CD8-positive, alpha-beta T cell (primary cell): ENCODE measurements at regions of chr1 and their contacts with region 1.

Region 1: DNA sequence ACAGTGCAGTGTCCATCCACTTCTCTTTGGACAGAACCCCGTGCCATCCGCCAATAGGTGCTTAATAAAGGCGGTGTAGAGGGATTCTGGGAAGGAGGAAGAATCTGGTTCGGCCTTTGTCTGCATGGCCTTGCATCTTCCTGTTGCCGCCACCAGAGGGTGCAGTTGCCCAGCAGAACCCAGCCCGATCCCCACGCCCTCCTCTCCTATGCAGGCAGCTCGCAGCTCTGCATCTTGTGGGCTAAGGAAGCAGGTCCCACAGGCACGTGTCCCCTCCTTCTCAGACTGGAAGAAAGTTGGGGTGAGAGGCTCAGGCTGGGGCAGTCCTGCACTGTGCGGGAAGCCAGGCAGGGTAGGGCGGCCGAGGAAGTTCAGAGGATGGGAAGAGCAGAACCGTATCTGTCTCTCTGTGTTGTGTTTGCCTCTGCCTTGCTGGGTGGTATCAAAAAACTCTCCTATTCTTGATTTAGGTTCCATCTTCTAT is 20.8 kb downstream of the NAV1 start:
- DNase-seq: peak; percentile 35 to 76 (median 65)
- ATAC-seq: peak; percentile 89
- H3K4me3 ChIP-seq: no peak overlapping the region
- H3K4me3 Mint-ChIP-seq: no peak overlapping the region
- H3K27ac ChIP-seq: no peak overlapping the region
- H3K27ac Mint-ChIP-seq: no peak overlapping the region
- H3K4me1 ChIP-seq: no peaks in the 10 kb centered on the region
- H3K4me1 Mint-ChIP-seq: peaks cover 4% of the 10 kb centered on the region
- H3K27me3 ChIP-seq: no peaks in the 10 kb centered on the region
- H3K27me3 Mint-ChIP-seq: no peaks in the 10 kb centered on the region
- CTCF ChIP-seq: peak; percentile 80

Region 2: DNA sequence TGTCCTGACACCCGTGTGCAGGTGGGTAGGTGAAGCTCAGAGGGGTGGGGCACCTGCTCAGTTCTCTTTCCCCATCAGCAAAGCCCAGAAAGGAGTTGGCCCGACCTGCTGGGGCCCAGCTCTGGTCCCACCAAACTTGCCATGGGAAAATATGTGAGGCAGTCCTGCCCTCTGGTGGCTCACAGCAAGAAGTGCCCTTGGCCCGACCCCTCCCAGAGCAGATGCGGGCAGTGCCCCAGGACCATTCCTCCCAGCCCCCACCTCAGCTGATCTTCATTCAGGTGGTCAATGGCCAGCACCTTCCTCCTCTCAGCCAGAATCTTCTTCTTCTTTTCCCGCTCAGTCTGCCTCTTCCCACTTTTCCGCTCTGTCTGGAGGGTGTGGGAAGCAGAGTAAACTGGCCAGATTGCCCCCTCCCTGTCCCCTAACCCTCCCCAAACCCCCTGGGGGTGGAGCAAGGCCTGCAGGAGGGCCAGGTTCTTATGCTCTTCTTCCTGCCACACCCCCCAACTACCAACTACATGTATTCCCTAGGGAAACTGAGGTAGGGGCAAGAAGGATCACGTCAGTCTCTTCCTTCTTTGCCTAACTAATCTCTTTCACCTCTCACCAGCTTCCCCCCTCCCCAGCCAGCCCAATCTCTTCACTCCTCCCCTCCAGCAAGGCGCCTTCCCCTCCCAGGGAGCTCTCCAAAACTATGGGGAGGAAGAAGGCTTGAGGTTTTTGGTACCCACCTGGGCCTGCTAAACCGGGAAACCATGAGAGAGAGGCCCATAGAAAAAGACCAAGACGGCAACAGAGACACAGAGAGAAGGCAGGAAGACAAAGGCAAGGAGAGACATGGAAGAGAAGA is 197.8 kb before region 1 on chr1:
- CTCF ChIA-PET with region 1: no interaction called
- POLR2A ChIA-PET with region 1: no interaction called
- intact Hi-C with region 1: no loop called
- DNase-seq: peak in 2 of 9 experiments; percentile 14 to 34
- ATAC-seq: no peak
- H3K4me3 ChIP-seq: no peak overlapping the region
- H3K4me3 Mint-ChIP-seq: no peak overlapping the region
- H3K27ac ChIP-seq: no peak overlapping the region
- H3K27ac Mint-ChIP-seq: no peak overlapping the region
- H3K4me1 ChIP-seq: no peaks in the 10 kb centered on the region
- H3K4me1 Mint-ChIP-seq: no peaks in the 10 kb centered on the region
- H3K27me3 ChIP-seq: no peaks in the 10 kb centered on the region
- H3K27me3 Mint-ChIP-seq: peaks cover 12% of the 10 kb centered on the region
- CTCF ChIP-seq: no peak

Region 3: DNA sequence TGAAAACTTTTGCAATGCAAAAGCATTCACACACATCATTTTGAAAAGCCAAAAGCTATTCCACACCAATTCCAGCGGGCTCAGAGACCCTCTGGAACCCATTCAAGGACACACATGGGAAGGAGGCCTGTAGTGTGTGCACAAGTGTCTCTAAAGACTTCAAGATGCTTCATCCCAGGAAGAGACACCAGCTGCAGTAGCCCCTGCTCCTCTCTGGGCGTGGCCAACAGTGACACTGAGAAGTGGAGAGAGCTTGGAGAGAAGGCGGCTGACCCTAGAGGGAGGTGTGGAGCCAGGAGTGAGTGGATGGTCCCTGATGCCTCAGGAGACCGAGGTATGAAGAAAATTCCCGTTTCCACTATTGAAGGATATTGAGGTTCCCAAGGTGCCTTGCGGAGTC is 123.3 kb before region 1 on chr1:
- CTCF ChIA-PET with region 1: no interaction called
- POLR2A ChIA-PET with region 1: no interaction called
- intact Hi-C with region 1: no loop called
- DNase-seq: no peak
- ATAC-seq: no peak
- H3K4me3 ChIP-seq: no peak overlapping the region
- H3K4me3 Mint-ChIP-seq: no peak overlapping the region
- H3K27ac ChIP-seq: no peak overlapping the region
- H3K27ac Mint-ChIP-seq: no peak overlapping the region
- H3K4me1 ChIP-seq: no peaks in the 10 kb centered on the region
- H3K4me1 Mint-ChIP-seq: peaks cover 5% of the 10 kb centered on the region
- H3K27me3 ChIP-seq: no peaks in the 10 kb centered on the region
- H3K27me3 Mint-ChIP-seq: peaks cover 17% of the 10 kb centered on the region
- CTCF ChIP-seq: no peak

Region 4: DNA sequence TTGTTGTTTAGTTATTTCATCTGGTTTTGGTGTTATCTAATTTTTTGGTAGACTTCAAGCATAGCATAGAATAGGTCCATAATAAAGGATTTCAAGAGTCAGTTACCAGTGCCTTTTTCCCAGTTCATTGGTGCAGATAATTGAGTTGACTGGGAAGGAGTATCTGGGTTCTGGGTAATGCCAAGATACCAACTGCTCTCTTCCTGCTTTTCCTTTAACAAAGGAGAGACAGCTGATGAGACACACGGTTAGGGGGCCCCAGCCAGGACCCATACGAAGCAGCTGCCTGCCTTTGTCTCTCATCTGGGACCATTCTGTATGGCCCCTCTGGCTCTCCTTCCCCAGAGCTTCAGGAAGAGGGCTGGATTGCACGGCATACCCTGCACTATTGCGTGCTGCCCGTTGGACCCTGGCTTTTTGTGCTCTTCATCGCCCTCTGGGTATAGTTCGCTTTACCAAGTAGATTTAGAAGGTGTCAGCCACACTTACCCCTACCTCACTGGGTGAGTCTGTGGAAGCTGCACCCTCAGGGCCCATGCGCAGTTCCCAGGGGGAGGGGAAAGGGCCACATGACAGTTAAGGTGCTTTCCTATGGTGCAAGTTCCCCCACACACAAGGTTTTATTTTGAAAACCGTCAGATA is 13.7 kb before region 1 on chr1:
- CTCF ChIA-PET with region 1: interaction called, 25 read pairs
- POLR2A ChIA-PET with region 1: no interaction called
- intact Hi-C with region 1: no loop called
- DNase-seq: no peak
- ATAC-seq: no peak
- H3K4me3 ChIP-seq: no peak overlapping the region
- H3K4me3 Mint-ChIP-seq: no peak overlapping the region
- H3K27ac ChIP-seq: no peak overlapping the region
- H3K27ac Mint-ChIP-seq: no peak overlapping the region
- H3K4me1 ChIP-seq: no peaks in the 10 kb centered on the region
- H3K4me1 Mint-ChIP-seq: no peaks in the 10 kb centered on the region
- H3K27me3 ChIP-seq: peaks cover 0 to 2% of the 10 kb centered on the region in 2 experiments
- H3K27me3 Mint-ChIP-seq: peaks cover 10% of the 10 kb centered on the region
- CTCF ChIP-seq: no peak

Region 5: GRCh38 chr1:201570886-201571624 is 11.3 kb after region 1 on chr1:
- CTCF ChIA-PET with region 1: interaction called, 19 read pairs
- POLR2A ChIA-PET with region 1: no interaction called
- intact Hi-C with region 1: no loop called
- DNase-seq: no peak
- ATAC-seq: no peak
- H3K4me3 ChIP-seq: no peak overlapping the region
- H3K4me3 Mint-ChIP-seq: no peak overlapping the region
- H3K27ac ChIP-seq: no peak overlapping the region
- H3K27ac Mint-ChIP-seq: no peak overlapping the region
- H3K4me1 ChIP-seq: peaks cover 3% of the 10 kb centered on the region
- H3K4me1 Mint-ChIP-seq: peaks cover 9% of the 10 kb centered on the region
- H3K27me3 ChIP-seq: no peaks in the 10 kb centered on the region
- H3K27me3 Mint-ChIP-seq: no peaks in the 10 kb centered on the region
- CTCF ChIP-seq: no peak

Region 6: GRCh38 chr1:201648066-201648906 is 88.6 kb after region 1 on chr1:
- CTCF ChIA-PET with region 1: no interaction called
- POLR2A ChIA-PET with region 1: no interaction called
- intact Hi-C with region 1: no loop called
- DNase-seq: no peak
- ATAC-seq: no peak
- H3K4me3 ChIP-seq: no peak overlapping the region
- H3K4me3 Mint-ChIP-seq: no peak overlapping the region
- H3K27ac ChIP-seq: no peak overlapping the region
- H3K27ac Mint-ChIP-seq: no peak overlapping the region
- H3K4me1 ChIP-seq: no peaks in the 10 kb centered on the region
- H3K4me1 Mint-ChIP-seq: peaks cover 3% of the 10 kb centered on the region
- H3K27me3 ChIP-seq: peaks cover 0 to 3% of the 10 kb centered on the region in 2 experiments
- H3K27me3 Mint-ChIP-seq: peaks cover 47% of the 10 kb centered on the region
- CTCF ChIP-seq: no peak

Region 7: DNA sequence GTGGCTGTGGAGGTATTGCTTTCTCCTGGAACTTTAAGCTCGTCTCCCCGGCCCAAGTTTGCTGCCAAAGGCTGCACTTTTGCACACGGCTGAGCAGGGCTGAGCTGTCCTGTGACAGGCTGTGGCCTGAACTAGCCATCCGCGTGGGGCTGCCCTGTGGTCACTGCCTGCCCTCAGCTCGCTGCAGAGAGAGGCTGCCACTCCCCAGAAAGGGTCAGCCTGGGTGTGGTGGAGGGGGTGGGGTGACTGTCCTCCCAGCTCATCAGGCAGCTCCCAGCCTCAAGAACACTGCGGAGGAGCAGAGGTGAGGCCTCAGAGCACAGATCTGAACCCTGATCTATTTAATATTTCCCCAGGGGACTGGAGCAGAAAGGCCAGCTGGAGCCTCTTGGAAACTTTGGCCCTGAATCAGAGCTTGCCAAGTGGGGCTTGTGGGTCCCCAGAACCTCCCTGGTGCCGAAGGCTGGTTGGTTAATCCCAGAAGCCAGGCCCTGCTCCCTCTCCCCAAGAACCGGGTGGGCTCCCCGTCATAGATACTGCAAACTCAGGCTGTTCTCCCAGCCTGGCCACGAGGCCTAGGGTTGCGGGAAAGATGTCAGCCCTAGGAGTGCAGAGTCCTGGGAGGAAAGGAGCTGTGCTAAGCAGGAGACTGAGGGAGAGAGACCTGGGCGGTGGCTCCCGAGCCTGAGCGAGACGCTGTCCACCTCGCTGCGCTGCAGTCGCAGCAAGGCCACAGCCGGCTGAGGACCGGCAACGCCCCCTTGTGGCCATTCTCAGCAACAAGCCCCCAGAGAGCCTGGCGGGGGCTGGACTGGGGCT is 144.1 kb after region 1 on chr1:
- CTCF ChIA-PET with region 1: interaction called, 28 read pairs
- POLR2A ChIA-PET with region 1: no interaction called
- intact Hi-C with region 1: loop called in 1 of 2 experiments (anchors 1 kb)
- DNase-seq: peak; percentile 27 to 73 (median 60)
- ATAC-seq: peak; percentile 40
- H3K4me3 ChIP-seq: no peak overlapping the region
- H3K4me3 Mint-ChIP-seq: no peak overlapping the region
- H3K27ac ChIP-seq: no peak overlapping the region
- H3K27ac Mint-ChIP-seq: no peak overlapping the region
- H3K4me1 ChIP-seq: no peaks in the 10 kb centered on the region
- H3K4me1 Mint-ChIP-seq: no peaks in the 10 kb centered on the region
- H3K27me3 ChIP-seq: no peaks in the 10 kb centered on the region
- H3K27me3 Mint-ChIP-seq: no peaks in the 10 kb centered on the region
- CTCF ChIP-seq: peak; percentile 68

Region 8: DNA sequence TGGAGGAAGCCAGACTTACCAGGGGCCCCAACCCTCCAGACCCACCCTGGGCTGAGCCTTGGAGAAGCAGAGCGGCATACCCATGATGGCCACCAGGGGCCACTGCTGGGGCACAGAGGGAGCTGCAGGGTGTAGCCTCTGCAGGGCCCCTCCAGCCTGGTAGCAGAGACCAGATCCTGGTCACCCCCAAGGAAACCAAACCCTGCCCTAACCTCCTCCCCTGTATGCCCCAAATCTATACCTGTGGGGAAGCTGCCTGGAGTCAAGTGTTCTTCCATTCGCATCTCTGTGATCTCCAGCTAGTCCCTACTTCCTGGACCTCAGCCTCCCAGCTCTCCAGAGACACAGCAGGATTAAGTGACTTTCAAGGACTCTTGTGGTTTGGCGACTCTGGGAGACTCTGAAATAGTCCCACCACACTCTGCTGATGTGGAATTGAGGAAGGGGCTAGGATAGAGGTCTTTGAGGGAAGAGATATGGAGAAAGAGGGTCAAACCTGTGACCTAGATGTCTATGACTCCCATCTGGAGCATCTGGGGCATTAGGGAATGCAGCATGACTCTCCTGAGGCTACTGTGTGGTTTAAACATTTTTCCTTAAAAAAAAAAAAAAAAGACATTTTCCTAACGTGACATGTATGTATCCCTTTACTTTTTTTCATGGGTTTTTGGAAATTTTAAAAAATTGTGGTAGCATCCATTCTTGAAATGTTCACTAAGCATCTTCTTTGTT is 150.0 kb after region 1 on chr1:
- CTCF ChIA-PET with region 1: interaction called, 28 read pairs
- POLR2A ChIA-PET with region 1: no interaction called
- intact Hi-C with region 1: loop called in 1 of 2 experiments (anchors 1 kb)
- DNase-seq: peak; percentile 21 to 71 (median 56)
- ATAC-seq: peak; percentile 82
- H3K4me3 ChIP-seq: no peak overlapping the region
- H3K4me3 Mint-ChIP-seq: no peak overlapping the region
- H3K27ac ChIP-seq: no peak overlapping the region
- H3K27ac Mint-ChIP-seq: no peak overlapping the region
- H3K4me1 ChIP-seq: no peaks in the 10 kb centered on the region
- H3K4me1 Mint-ChIP-seq: no peaks in the 10 kb centered on the region
- H3K27me3 ChIP-seq: no peaks in the 10 kb centered on the region
- H3K27me3 Mint-ChIP-seq: no peaks in the 10 kb centered on the region
- CTCF ChIP-seq: peak; percentile 64

Region 9: GRCh38 chr1:201792534-201793305 is 233.0 kb after region 1 on chr1:
- CTCF ChIA-PET with region 1: interaction called, 78 read pairs
- POLR2A ChIA-PET with region 1: no interaction called
- intact Hi-C with region 1: loop called in 1 of 2 experiments (anchors 1 kb)
- DNase-seq: peak in 8 of 9 experiments; percentile 6 to 62 (median 48)
- ATAC-seq: peak; percentile 46
- H3K4me3 ChIP-seq: no peak overlapping the region
- H3K4me3 Mint-ChIP-seq: no peak overlapping the region
- H3K27ac ChIP-seq: no peak overlapping the region
- H3K27ac Mint-ChIP-seq: no peak overlapping the region
- H3K4me1 ChIP-seq: no peaks in the 10 kb centered on the region
- H3K4me1 Mint-ChIP-seq: no peaks in the 10 kb centered on the region
- H3K27me3 ChIP-seq: no peaks in the 10 kb centered on the region
- H3K27me3 Mint-ChIP-seq: no peaks in the 10 kb centered on the region
- CTCF ChIP-seq: peak; percentile 89

Region 10: DNA sequence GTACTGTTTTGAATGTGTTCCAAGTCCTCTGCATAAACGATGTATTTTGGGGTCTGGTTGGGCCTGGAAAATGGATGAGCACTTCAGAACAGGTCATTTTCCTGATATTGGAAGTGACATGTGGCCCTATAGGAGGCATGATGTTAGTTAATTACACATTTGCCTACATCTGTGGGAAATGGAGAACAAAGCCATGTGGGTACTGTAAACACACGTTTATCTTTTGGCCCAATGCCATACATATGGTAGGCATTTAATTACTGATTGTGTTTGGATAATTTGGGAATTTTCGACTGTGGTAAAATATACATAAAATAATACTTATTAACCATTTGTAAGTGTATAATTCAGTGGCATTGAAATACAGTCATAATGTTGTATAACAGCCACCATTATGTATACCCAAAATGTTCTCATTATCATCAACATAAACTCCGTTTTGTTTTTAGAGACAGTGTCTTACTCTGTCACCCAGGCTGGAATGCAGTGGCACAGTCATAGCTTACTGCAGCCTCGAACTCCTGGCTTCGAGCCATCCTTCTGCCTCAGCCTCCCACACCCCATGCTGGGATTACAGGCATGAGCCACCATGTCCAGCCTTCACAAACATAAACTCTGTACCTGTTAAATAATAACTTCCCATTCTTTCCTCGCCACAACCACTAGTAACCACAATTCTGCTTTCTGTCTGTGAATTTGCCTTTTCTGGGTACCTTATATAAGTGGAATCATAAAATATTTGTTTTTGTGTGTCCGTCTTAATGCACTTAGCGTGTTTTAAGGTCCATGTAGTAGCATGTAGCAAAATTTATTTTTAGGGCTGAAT is 410.8 kb after region 1 on chr1:
- CTCF ChIA-PET with region 1: interaction called, 5 read pairs
- POLR2A ChIA-PET with region 1: no interaction called
- intact Hi-C with region 1: loop called in 1 of 2 experiments (anchors 10 kb)
- DNase-seq: no peak
- ATAC-seq: no peak
- H3K4me3 ChIP-seq: no peak overlapping the region
- H3K4me3 Mint-ChIP-seq: no peak overlapping the region
- H3K27ac ChIP-seq: no peak overlapping the region
- H3K27ac Mint-ChIP-seq: no peak overlapping the region
- H3K4me1 ChIP-seq: no peaks in the 10 kb centered on the region
- H3K4me1 Mint-ChIP-seq: peaks cover 4% of the 10 kb centered on the region
- H3K27me3 ChIP-seq: no peaks in the 10 kb centered on the region
- H3K27me3 Mint-ChIP-seq: no peaks in the 10 kb centered on the region
- CTCF ChIP-seq: no peak

Region 11: GRCh38 chr1:202433155-202434043 is 873.7 kb after region 1 on chr1:
- CTCF ChIA-PET with region 1: no interaction called
- POLR2A ChIA-PET with region 1: no interaction called
- intact Hi-C with region 1: no loop called
- DNase-seq: no peak
- ATAC-seq: no peak
- H3K4me3 ChIP-seq: no peak overlapping the region
- H3K4me3 Mint-ChIP-seq: no peak overlapping the region
- H3K27ac ChIP-seq: no peak overlapping the region
- H3K27ac Mint-ChIP-seq: no peak overlapping the region
- H3K4me1 ChIP-seq: no peaks in the 10 kb centered on the region
- H3K4me1 Mint-ChIP-seq: no peaks in the 10 kb centered on the region
- H3K27me3 ChIP-seq: no peaks in the 10 kb centered on the region
- H3K27me3 Mint-ChIP-seq: no peaks in the 10 kb centered on the region
- CTCF ChIP-seq: no peak